Mammary epithelial cell (primary cell): ENCODE measurements at regions of chr11 and their contacts with region 1.

Region 1: DNA sequence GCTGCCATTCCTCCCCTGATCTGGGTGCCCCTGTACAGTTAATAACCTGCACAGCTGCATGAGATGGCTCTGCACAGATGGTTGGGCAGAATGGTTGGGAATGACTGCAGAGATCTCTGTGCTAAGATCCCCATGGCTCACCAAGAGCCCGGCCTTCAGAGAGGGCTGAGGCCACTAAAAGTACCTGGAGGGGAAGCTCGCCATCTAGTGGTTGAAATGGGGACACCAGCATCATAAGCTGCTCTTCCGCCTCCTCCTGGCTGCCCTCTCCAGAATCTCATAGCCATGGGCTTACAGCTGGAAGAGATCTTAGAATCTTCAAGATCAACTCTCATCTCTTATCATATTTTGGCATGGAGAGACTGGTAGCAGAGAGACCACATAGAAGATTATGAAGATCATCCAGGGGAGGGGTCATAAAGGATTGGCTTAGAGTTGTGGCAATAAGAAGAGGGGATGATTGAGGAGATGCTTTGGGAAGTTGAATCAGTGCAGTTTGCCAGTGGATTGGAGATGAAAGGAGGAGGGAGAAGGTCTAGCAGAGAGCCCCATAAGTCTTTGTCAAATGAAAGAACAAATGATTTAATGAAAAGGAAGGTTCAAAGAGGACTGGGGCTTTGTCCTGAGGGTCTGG is 22.0 kb upstream of the TLCD5 start:
- DNase-seq: peak; percentile 71
- H3K4me3 ChIP-seq: no peak overlapping the region
- H3K27ac ChIP-seq: no peak overlapping the region
- H3K4me1 ChIP-seq: peaks cover 39% of the 10 kb centered on the region
- H3K27me3 ChIP-seq: no peaks in the 10 kb centered on the region
- CTCF ChIP-seq: peak; percentile 97 to 98

Region 2: GRCh38 chr11:120128782-120129172 is 174.3 kb before region 1 on chr11:
- CTCF ChIA-PET with region 1: no interaction called
- dilution Hi-C with region 1: no loop called
- in situ Hi-C with region 1: no loop called
- intact Hi-C with region 1: loop called (anchors 5 kb)
- DNase-seq: peak; percentile 95
- H3K4me3 ChIP-seq: peak overlapping the region in 1 of 3 experiments; percentile 24
- H3K27ac ChIP-seq: peak overlapping the region; percentile 97
- H3K4me1 ChIP-seq: peaks cover 82% of the 10 kb centered on the region
- H3K27me3 ChIP-seq: no peaks in the 10 kb centered on the region
- CTCF ChIP-seq: no peak

Region 3: DNA sequence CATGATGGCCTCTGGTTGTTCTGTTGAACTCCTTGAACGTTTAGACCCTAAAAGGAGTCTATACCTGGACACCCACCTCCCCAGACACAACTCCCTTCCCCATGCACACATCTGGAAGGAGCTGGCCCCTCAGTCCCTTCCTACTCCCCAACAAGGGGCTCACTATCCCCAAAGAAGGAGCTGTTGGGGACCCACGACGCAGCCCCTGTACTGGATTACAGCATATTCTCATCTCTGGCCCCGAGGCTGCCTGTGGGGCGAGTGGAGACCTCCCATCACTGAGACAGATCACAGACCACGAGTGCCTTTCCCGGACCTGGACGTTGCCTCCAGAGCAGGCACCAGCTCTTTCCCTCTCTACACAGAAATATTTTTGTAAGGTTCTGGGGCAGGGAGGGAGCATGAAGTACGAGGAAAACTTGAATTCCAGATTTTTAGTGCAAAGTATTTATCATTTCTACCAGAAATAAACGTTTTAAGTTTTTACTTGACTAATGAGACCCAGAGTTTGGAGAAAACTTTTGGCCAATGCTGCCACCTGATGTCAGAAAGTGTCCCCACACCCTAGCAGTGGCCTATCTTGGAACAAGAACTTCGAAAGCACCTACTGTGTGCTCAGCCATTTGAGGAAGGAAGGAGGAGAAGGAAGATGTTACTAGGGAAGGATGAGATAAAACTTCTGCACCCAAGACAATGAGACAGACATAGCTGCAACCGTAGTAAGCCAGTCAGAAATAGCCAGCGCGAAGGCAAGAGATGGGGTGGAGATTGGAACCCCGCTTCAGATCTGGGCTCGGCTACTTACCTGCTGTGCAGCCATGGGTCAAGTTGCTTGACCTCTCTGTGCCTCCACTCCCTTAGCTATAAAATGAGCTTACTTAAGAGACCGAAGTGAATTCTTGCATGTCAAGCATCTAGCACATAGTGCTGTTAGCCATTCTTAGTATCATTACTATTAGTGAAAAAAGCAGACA is 73.4 kb before region 1 on chr11:
- CTCF ChIA-PET with region 1: interaction called, 16 read pairs
- dilution Hi-C with region 1: no loop called
- in situ Hi-C with region 1: loop called in 1 of 2 experiments (anchors 5 kb)
- intact Hi-C with region 1: no loop called
- DNase-seq: no peak
- H3K4me3 ChIP-seq: no peak overlapping the region
- H3K27ac ChIP-seq: no peak overlapping the region
- H3K4me1 ChIP-seq: no peaks in the 10 kb centered on the region
- H3K27me3 ChIP-seq: no peaks in the 10 kb centered on the region
- CTCF ChIP-seq: peak; percentile 64 to 71

Region 4: GRCh38 chr11:120564573-120565311 is 261.6 kb after region 1 on chr11:
- CTCF ChIA-PET with region 1: interaction called, 10 read pairs
- dilution Hi-C with region 1: no loop called
- in situ Hi-C with region 1: no loop called
- intact Hi-C with region 1: no loop called
- DNase-seq: no peak
- H3K4me3 ChIP-seq: peak overlapping the region in 2 of 3 experiments; percentile 35 to 39
- H3K27ac ChIP-seq: no peak overlapping the region
- H3K4me1 ChIP-seq: peaks cover 22% of the 10 kb centered on the region
- H3K27me3 ChIP-seq: peaks cover 2% of the 10 kb centered on the region
- CTCF ChIP-seq: peak in 1 of 2 donors; percentile 37